PC-9 (cell line): ENCODE measurements at regions of chr22 and their contacts with region 1.

Region 1: GRCh38 chr22:23144932-23145873 is at the start of gene RAB36:
- DNase-seq: peak; percentile 90 to 95
- H3K4me3 ChIP-seq: peak within 1 kb of the TSS; percentile 48; the same call in 1 of the 2 replicates
- H3K27ac ChIP-seq: no peak within 1 kb of the TSS
- H3K4me1 ChIP-seq: peaks cover 22% of the 10 kb centered on the region
- H3K27me3 ChIP-seq: no peaks in the 10 kb centered on the region
- CTCF ChIP-seq: no peak
- total RNA-seq, gene RAB36: 5.8 and 6.8 TPM in 2 replicates

Region 2: GRCh38 chr22:23075525-23076216 is 69.5 kb before region 1 on chr22:
- CTCF ChIA-PET with region 1: no interaction called
- POLR2A ChIA-PET with region 1: no interaction called
- intact Hi-C with region 1: no loop called
- DNase-seq: peak in 1 of 2 experiments; percentile 22
- H3K4me3 ChIP-seq: no peak overlapping the region
- H3K27ac ChIP-seq: no peak overlapping the region
- H3K4me1 ChIP-seq: no peaks in the 10 kb centered on the region
- H3K27me3 ChIP-seq: peaks cover 4% of the 10 kb centered on the region
- CTCF ChIP-seq: no peak

Region 3: DNA sequence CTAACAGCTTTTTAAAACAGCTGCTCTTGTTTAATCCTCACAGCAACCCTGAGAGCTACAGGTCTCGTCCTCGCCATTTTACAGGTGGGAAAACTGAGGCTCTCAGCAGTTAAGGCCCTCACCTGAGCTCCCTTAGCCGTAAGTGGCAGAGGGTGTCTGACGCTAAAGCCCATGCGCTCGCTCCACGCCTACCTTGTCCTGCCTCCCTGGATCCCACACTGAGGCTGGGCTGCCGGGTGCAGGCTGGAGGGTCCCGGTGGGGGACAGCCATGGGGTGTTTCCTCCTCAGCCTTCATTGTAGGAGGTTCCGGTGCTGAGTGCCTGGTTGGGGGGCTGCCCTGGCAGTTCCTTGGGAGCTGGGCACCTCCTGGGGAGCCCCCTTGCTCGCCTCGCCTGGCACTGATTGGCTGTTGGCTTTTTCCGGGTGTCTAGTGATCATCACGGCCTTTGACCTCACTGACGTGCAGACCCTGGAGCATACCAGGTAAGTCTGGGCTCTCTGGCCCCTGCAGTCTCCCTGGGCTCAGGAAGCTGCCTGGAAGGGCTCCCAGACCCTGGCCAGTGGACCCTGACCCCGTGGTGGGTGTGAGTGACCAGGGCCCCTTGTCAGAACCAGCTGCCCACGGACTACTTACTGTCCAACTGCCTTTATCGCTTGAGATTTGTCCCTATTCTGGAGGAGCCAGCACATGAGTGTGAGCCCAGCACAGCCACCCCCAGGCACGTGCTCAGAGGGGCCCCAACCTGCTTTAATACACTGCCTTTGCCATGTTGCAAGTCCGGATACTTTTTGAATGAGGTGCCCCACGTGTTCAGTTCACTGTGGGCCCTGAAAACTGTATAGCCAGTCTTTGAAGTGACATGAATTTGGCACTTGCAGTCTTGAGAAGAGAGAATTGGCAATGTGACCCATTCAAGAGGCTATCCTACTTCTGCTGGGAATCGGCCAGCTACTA is 12.6 kb after region 1 on chr22:
- CTCF ChIA-PET with region 1: interaction called, 10 read pairs
- POLR2A ChIA-PET with region 1: no interaction called
- intact Hi-C with region 1: no loop called
- DNase-seq: no peak
- H3K4me3 ChIP-seq: no peak overlapping the region
- H3K27ac ChIP-seq: no peak overlapping the region
- H3K4me1 ChIP-seq: peaks cover 11% of the 10 kb centered on the region; the same call in 1 of the 2 replicates
- H3K27me3 ChIP-seq: no peaks in the 10 kb centered on the region
- CTCF ChIP-seq: no peak

Region 4: GRCh38 chr22:23613193-23613972 is 468.2 kb after region 1 on chr22:
- CTCF ChIA-PET with region 1: no interaction called
- POLR2A ChIA-PET with region 1: no interaction called
- intact Hi-C with region 1: no loop called
- DNase-seq: no peak
- H3K4me3 ChIP-seq: no peak overlapping the region
- H3K27ac ChIP-seq: no peak overlapping the region
- H3K4me1 ChIP-seq: no peaks in the 10 kb centered on the region
- H3K27me3 ChIP-seq: 0 out of 2 replicates have a peak, but pooled peaks cover 3% of the 10 kb centered on the region
- CTCF ChIP-seq: no peak